Activated CD4-positive, alpha-beta memory T cell treated with anti-CD3 and anti-CD28 coated beads, Interleukin-2, amount 10 ng/mL, durations not matched to agents 7 days and 5 days (primary cell): ENCODE measurements at regions of chr14 and their contacts with region 1.

Region 1: DNA sequence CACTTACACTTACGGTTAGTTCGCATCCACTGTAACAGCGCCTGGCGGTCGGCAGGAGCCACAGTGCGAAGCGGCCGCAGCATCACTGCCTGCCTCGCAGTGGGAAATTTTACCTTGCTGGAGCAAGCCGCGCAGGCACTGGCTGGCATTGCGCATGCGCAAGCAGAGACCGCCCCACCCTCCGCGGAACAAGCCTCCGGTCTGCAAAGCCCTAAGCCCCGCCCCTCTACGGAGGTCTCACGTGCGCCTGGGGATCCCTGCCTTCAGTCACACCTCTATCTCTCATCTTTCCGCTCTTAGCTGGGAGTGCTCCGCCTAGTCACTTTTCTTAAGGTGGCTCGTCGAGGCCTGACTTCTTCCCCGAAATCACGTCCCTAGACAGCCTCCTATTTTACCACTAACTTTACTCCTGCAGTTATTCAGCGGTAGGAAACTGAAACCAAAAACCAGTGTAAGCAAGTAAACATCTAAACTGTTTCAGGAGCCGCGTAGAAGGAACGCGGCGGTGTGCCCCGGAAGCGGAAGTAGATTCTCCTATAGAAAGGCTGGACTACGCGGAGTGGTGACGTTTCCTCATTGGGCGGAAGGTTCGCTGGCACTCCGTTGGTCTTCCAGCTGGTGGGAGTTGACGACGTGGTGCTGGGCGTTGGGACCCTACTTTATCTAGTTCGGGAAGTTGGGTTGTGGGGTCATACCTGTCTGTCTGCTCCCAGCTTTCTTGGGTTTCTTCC is at the start of gene SRP54:
- DNase-seq: peak; percentile 100
- H3K4me3 Mint-ChIP-seq: no peak within 1 kb of the TSS
- H3K27ac Mint-ChIP-seq: no peak within 1 kb of the TSS
- H3K4me1 Mint-ChIP-seq: peaks cover 17% of the 10 kb centered on the region
- H3K27me3 Mint-ChIP-seq: no peaks in the 10 kb centered on the region
- total RNA-seq, gene SRP54: 69.4 to 71.2 TPM

Region 2: DNA sequence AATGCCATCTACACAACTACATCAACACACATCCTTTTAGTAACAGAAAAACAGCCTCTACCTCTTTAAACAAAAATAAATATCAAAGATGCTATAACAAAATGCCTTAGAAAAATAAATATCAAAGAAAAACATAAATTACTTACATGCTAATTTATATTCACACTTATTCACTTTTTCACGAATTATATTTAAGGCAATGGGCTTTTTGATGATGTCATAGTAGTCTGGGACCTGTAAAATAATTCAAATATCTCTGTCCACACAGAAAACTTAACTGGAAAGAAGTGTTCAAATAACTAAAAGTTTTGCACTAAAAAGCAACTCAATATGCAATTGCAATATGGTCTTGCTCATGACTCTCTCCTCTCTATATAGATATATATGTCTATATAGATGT is 227.9 kb before region 1 on chr14:
- CTCF ChIA-PET with region 1: no interaction called
- POLR2A ChIA-PET with region 1: no interaction called
- DNase-seq: no peak
- H3K4me3 Mint-ChIP-seq: no peak overlapping the region
- H3K27ac Mint-ChIP-seq: no peak overlapping the region
- H3K4me1 Mint-ChIP-seq: no peaks in the 10 kb centered on the region
- H3K27me3 Mint-ChIP-seq: no peaks in the 10 kb centered on the region

Region 3: GRCh38 chr14:34875031-34875922 is 107.3 kb before region 1 on chr14 and contains the start of gene BAZ1A:
- CTCF ChIA-PET with region 1: interaction called, 4 read pairs
- POLR2A ChIA-PET with region 1: interaction called, 93 read pairs
- DNase-seq: peak; percentile 44
- H3K4me3 Mint-ChIP-seq: peak within 1 kb of the TSS; percentile 96
- H3K27ac Mint-ChIP-seq: peak within 1 kb of the TSS; percentile 99
- H3K4me1 Mint-ChIP-seq: peaks cover 37% of the 10 kb centered on the region
- H3K27me3 Mint-ChIP-seq: no peaks in the 10 kb centered on the region
- total RNA-seq, gene BAZ1A: 49.8 to 53.1 TPM

Region 4: GRCh38 chr14:34966413-34966812 is 16.2 kb before region 1 on chr14:
- CTCF ChIA-PET with region 1: interaction called, 7 read pairs
- POLR2A ChIA-PET with region 1: interaction called, 16 read pairs
- DNase-seq: no peak
- H3K4me3 Mint-ChIP-seq: no peak overlapping the region
- H3K27ac Mint-ChIP-seq: no peak overlapping the region
- H3K4me1 Mint-ChIP-seq: peaks cover 15% of the 10 kb centered on the region
- H3K27me3 Mint-ChIP-seq: no peaks in the 10 kb centered on the region

Region 5: GRCh38 chr14:35032562-35032961 is 50.0 kb after region 1 on chr14:
- CTCF ChIA-PET with region 1: no interaction called
- POLR2A ChIA-PET with region 1: no interaction called
- DNase-seq: no peak
- H3K4me3 Mint-ChIP-seq: no peak overlapping the region
- H3K27ac Mint-ChIP-seq: no peak overlapping the region
- H3K4me1 Mint-ChIP-seq: no peaks in the 10 kb centered on the region
- H3K27me3 Mint-ChIP-seq: no peaks in the 10 kb centered on the region

Region 6: GRCh38 chr14:35121887-35122695 is 139.5 kb after region 1 on chr14 and contains the starts of genes PPP2R3C and PRORP:
- CTCF ChIA-PET with region 1: interaction called, 3 read pairs
- POLR2A ChIA-PET with region 1: interaction called, 54 read pairs
- DNase-seq: peak; percentile 92
- H3K4me3 Mint-ChIP-seq: peak within 1 kb of the TSS; percentile 91
- H3K27ac Mint-ChIP-seq: peak within 1 kb of the TSS; percentile 98
- H3K4me1 Mint-ChIP-seq: peaks cover 59% of the 10 kb centered on the region
- H3K27me3 Mint-ChIP-seq: no peaks in the 10 kb centered on the region
- total RNA-seq, gene PPP2R3C: 51.7 to 59.4 TPM
- total RNA-seq, gene PRORP: 43.3 to 44.9 TPM